Mammary epithelial cell (primary cell): ENCODE measurements at regions of chr20 and their contacts with region 1.

Region 1: GRCh38 chr20:44210422-44211176 is at the start of gene OSER1:
- DNase-seq: peak; percentile 98
- H3K4me3 ChIP-seq: peak within 1 kb of the TSS; percentile 76 to 99 (median 97)
- H3K27ac ChIP-seq: peak within 1 kb of the TSS; percentile 97
- H3K4me1 ChIP-seq: peaks cover 39% of the 10 kb centered on the region
- H3K27me3 ChIP-seq: no peaks in the 10 kb centered on the region
- CTCF ChIP-seq: no peak
- total RNA-seq, gene OSER1: 18.5 to 29.5 TPM

Region 2: GRCh38 chr20:44129911-44130718 is 80.5 kb before region 1 on chr20:
- CTCF ChIA-PET with region 1: no interaction called
- dilution Hi-C with region 1: no loop called
- in situ Hi-C with region 1: no loop called
- intact Hi-C with region 1: no loop called
- DNase-seq: no peak
- H3K4me3 ChIP-seq: no peak overlapping the region
- H3K27ac ChIP-seq: no peak overlapping the region
- H3K4me1 ChIP-seq: no peaks in the 10 kb centered on the region
- H3K27me3 ChIP-seq: no peaks in the 10 kb centered on the region
- CTCF ChIP-seq: no peak

Region 3: DNA sequence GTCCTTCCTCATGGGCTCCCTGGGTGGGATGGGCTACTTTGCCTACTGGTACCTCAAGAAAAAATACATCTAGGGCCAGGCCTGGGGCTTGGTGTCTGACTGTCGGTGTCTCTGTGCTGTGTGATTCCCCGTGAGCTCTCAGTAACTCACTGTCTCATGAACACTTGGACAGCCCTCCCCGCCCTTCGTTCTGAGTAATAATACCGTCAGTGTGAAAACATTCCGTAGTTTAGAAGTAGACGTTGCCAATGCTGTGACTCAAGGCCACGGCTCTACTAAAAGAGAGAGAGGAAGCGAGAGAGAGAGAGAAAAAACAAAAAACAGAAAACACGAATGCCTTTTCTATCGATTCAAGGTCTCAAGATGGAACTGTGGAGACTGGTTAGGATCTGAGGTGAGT is 68.6 kb after region 1 on chr20:
- CTCF ChIA-PET with region 1: no interaction called
- dilution Hi-C with region 1: no loop called
- in situ Hi-C with region 1: no loop called
- intact Hi-C with region 1: no loop called
- DNase-seq: peak; percentile 24
- H3K4me3 ChIP-seq: no peak overlapping the region
- H3K27ac ChIP-seq: no peak overlapping the region
- H3K4me1 ChIP-seq: no peaks in the 10 kb centered on the region
- H3K27me3 ChIP-seq: peaks cover under 1% of the 10 kb centered on the region
- CTCF ChIP-seq: no peak

Region 4: GRCh38 chr20:44407402-44408184 is 197.0 kb after region 1 on chr20:
- CTCF ChIA-PET with region 1: no interaction called
- dilution Hi-C with region 1: no loop called
- in situ Hi-C with region 1: no loop called
- intact Hi-C with region 1: no loop called
- DNase-seq: peak; percentile 98
- H3K4me3 ChIP-seq: no peak overlapping the region
- H3K27ac ChIP-seq: peak overlapping the region; percentile 53
- H3K4me1 ChIP-seq: peaks cover 26% of the 10 kb centered on the region
- H3K27me3 ChIP-seq: no peaks in the 10 kb centered on the region
- CTCF ChIP-seq: no peak

Region 5: DNA sequence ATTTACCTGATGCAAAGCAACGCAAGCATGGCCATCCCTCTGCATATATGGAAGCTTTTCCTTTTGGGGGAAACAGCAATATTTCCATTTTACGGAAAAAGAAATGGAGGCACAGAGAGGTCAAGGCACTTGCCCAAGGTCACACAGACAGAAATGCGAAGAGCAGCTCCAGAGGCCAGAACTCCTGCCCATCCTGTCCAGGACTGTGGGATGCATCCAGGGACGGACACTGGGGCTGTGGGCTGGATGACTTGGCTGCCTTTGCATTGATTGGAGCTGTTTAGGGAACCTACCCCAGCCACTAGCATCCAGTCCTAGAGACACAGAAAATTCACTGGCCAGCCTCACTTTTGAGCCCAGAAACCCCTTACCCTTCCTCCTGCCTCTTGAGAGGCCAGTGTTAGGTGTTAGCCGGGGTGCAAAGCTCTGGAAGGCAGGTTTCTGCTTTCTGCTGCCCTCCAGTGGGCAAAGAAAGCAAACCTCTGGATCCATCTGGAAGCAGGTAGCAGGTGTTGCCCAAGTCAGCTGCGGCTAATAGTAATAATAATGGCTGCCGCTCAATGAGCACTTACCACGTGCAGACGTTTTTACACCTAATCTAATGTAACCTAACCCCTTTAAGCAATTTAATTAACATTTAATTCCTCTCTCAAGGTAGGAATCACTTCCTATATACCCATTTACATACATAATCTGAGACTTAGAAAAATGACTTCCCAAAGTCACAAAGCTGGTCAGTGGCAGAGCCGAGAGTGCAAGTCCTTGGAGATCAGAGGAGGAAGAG is 472.9 kb after region 1 on chr20:
- CTCF ChIA-PET with region 1: no interaction called
- dilution Hi-C with region 1: no loop called
- in situ Hi-C with region 1: no loop called
- intact Hi-C with region 1: loop called (anchors 10 kb)
- DNase-seq: peak; percentile 58
- H3K4me3 ChIP-seq: no peak overlapping the region
- H3K27ac ChIP-seq: no peak overlapping the region
- H3K4me1 ChIP-seq: peaks cover 8% of the 10 kb centered on the region
- H3K27me3 ChIP-seq: no peaks in the 10 kb centered on the region
- CTCF ChIP-seq: peak; percentile 63 to 84